CD4-positive, alpha-beta memory T cell (primary cell): ENCODE measurements at regions of chr2 and their contacts with region 1.

Region 1: GRCh38 chr2:636641-637405 is 40.4 kb downstream of the TMEM18 start:
- DNase-seq: peak; percentile 52 to 64 (median 54)
- H3K4me3 ChIP-seq: peak overlapping the region; percentile 21 to 42
- H3K4me3 Mint-ChIP-seq: peak overlapping the region; percentile 77 to 92 (median 84)
- H3K27ac ChIP-seq: no peak overlapping the region
- H3K27ac Mint-ChIP-seq: peak overlapping the region in 6 of 7 donors; percentile 20 to 84 (median 70)
- H3K4me1 ChIP-seq: peaks cover 4% of the 10 kb centered on the region
- H3K4me1 Mint-ChIP-seq: peaks cover 2 to 6% (median 4%) of the 10 kb centered on the region in 4 donors
- H3K27me3 ChIP-seq: no peaks in the 10 kb centered on the region
- H3K27me3 Mint-ChIP-seq: peaks cover 2 to 9% of the 10 kb centered on the region in 2 donors

Region 2: GRCh38 chr2:175880-176800 is 460.7 kb before region 1 on chr2:
- CTCF ChIA-PET with region 1: interaction called, 5 read pairs
- POLR2A ChIA-PET with region 1: no interaction called
- intact Hi-C with region 1: loop called (anchors 1 kb)
- DNase-seq: peak; percentile 61 to 72 (median 69)
- H3K4me3 ChIP-seq: peak overlapping the region; percentile 11 to 45
- H3K4me3 Mint-ChIP-seq: peak overlapping the region; percentile 42 to 87 (median 72)
- H3K27ac ChIP-seq: no peak overlapping the region
- H3K27ac Mint-ChIP-seq: peak overlapping the region; percentile 69 to 93 (median 85)
- H3K4me1 ChIP-seq: peaks cover 37% of the 10 kb centered on the region
- H3K4me1 Mint-ChIP-seq: peaks cover 35 to 56% (median 38%) of the 10 kb centered on the region in 4 donors
- H3K27me3 ChIP-seq: no peaks in the 10 kb centered on the region
- H3K27me3 Mint-ChIP-seq: no peaks in the 10 kb centered on the region

Region 3: DNA sequence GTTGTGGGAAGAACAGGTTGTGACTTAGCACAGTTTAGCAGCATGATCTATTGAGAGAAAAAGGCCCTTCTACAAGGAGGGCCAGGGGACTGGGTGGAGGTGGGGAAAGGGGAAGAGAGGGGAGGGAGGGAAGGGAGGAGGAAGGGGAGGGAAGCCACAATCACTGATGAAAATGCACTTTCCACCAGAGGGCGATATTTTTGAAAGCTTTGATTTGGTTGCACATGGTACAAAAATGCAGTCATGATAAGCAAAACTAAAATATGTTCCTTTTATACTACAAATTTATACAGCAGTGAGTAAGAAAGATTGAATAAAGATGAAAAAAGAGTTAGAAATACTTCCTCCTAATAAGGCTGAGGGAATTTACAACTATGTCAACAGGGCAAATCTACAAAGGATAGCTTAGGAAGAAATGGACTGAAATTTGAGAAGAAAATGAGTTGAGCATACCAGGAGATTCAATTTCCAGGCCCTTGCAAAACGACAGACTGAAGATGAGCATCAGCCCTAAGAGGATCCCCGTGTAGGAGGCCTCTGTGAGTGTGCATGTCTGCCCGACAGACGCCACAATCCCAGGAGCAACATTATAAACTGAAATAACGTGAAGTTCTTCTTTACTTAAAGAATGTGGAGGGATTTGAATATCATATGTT is 390.2 kb before region 1 on chr2:
- CTCF ChIA-PET with region 1: interaction called, 88 read pairs
- POLR2A ChIA-PET with region 1: interaction called, 4 read pairs
- intact Hi-C with region 1: loop called (anchors 1 kb)
- DNase-seq: peak; percentile 33 to 54 (median 45)
- H3K4me3 ChIP-seq: no peak overlapping the region
- H3K4me3 Mint-ChIP-seq: no peak overlapping the region
- H3K27ac ChIP-seq: no peak overlapping the region
- H3K27ac Mint-ChIP-seq: peak overlapping the region in 2 of 7 donors; percentile 13 to 56
- H3K4me1 ChIP-seq: no peaks in the 10 kb centered on the region
- H3K4me1 Mint-ChIP-seq: peaks cover 0 to 5% (median 4%) of the 10 kb centered on the region in 4 donors
- H3K27me3 ChIP-seq: no peaks in the 10 kb centered on the region
- H3K27me3 Mint-ChIP-seq: no peaks in the 10 kb centered on the region

Region 4: DNA sequence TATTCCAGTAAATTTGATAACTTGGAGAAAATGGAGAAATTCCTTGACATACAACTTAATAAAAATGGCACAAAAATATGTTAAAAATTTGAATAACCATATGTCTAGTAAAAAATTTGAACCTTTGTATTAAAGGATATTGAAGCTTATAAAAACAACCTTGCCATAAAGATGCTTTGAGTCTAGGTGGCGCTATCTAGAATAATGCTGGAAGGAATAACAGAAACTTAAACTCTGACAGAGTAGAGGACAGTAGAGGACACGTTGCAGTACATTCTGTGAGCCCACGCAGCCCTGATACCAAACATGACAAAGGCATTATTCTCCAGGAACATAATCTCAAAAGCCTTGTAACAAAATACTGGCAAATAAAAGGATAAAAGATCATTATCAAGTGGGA is 304.2 kb before region 1 on chr2:
- CTCF ChIA-PET with region 1: interaction called, 8 read pairs
- POLR2A ChIA-PET with region 1: no interaction called
- intact Hi-C with region 1: loop called (anchors 2 kb)
- DNase-seq: no peak
- H3K4me3 ChIP-seq: no peak overlapping the region
- H3K4me3 Mint-ChIP-seq: no peak overlapping the region
- H3K27ac ChIP-seq: no peak overlapping the region
- H3K27ac Mint-ChIP-seq: no peak overlapping the region
- H3K4me1 ChIP-seq: no peaks in the 10 kb centered on the region
- H3K4me1 Mint-ChIP-seq: no peaks in the 10 kb centered on the region
- H3K27me3 ChIP-seq: peaks cover 5% of the 10 kb centered on the region
- H3K27me3 Mint-ChIP-seq: peaks cover 16 to 29% of the 10 kb centered on the region in 2 donors

Region 5: GRCh38 chr2:393711-394696 is 242.8 kb before region 1 on chr2:
- CTCF ChIA-PET with region 1: interaction called, 3 read pairs
- POLR2A ChIA-PET with region 1: no interaction called
- intact Hi-C with region 1: loop called (anchors 5 kb)
- DNase-seq: peak; percentile 73 to 83 (median 76)
- H3K4me3 ChIP-seq: peak overlapping the region; percentile 38 to 41
- H3K4me3 Mint-ChIP-seq: peak overlapping the region; percentile 85 to 91 (median 88)
- H3K27ac ChIP-seq: peak overlapping the region; percentile 51
- H3K27ac Mint-ChIP-seq: peak overlapping the region; percentile 84 to 98 (median 97)
- H3K4me1 ChIP-seq: peaks cover 10% of the 10 kb centered on the region
- H3K4me1 Mint-ChIP-seq: peaks cover 12 to 26% (median 12%) of the 10 kb centered on the region in 4 donors
- H3K27me3 ChIP-seq: no peaks in the 10 kb centered on the region
- H3K27me3 Mint-ChIP-seq: no peaks in the 10 kb centered on the region

Region 6: GRCh38 chr2:529425-529824 is 107.4 kb before region 1 on chr2:
- CTCF ChIA-PET with region 1: interaction called, 8 read pairs
- POLR2A ChIA-PET with region 1: no interaction called
- intact Hi-C with region 1: loop called (anchors 2 kb)
- DNase-seq: peak in 4 of 5 donors; percentile 1 to 22 (median 14)
- H3K4me3 ChIP-seq: no peak overlapping the region
- H3K4me3 Mint-ChIP-seq: no peak overlapping the region
- H3K27ac ChIP-seq: no peak overlapping the region
- H3K27ac Mint-ChIP-seq: no peak overlapping the region
- H3K4me1 ChIP-seq: no peaks in the 10 kb centered on the region
- H3K4me1 Mint-ChIP-seq: no peaks in the 10 kb centered on the region
- H3K27me3 ChIP-seq: no peaks in the 10 kb centered on the region
- H3K27me3 Mint-ChIP-seq: peaks cover 7 to 8% of the 10 kb centered on the region in 2 donors

Region 7: DNA sequence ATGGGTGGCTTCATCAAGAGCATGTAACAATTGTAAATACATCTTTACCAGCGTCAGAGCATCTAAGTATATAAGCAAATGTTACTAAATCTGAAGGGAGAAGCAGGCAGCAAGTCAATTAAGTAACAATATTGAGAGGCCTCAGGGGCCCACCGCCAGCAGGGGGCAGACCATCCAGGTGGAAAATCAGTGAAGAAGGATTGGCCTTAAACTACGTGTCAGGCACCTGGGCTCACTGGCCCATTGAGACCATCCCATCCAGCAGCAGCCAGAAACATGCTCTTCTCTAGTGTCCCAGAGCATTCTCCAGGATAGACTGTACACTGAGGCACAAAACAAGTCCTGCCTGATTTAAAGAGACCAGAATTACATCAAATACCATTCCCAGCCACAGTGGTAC is 217.6 kb after region 1 on chr2:
- CTCF ChIA-PET with region 1: no interaction called
- POLR2A ChIA-PET with region 1: no interaction called
- intact Hi-C with region 1: no loop called
- DNase-seq: peak in 2 of 5 donors; percentile 14 to 42
- H3K4me3 ChIP-seq: no peak overlapping the region
- H3K4me3 Mint-ChIP-seq: peak overlapping the region in 5 of 8 donors; percentile 32 to 71 (median 52)
- H3K27ac ChIP-seq: no peak overlapping the region
- H3K27ac Mint-ChIP-seq: peak overlapping the region in 3 of 7 donors; percentile 33 to 91 (median 43)
- H3K4me1 ChIP-seq: peaks cover 17% of the 10 kb centered on the region
- H3K4me1 Mint-ChIP-seq: peaks cover 9 to 31% (median 21%) of the 10 kb centered on the region in 4 donors
- H3K27me3 ChIP-seq: no peaks in the 10 kb centered on the region
- H3K27me3 Mint-ChIP-seq: no peaks in the 10 kb centered on the region